AG04449 (cell line): ENCODE measurements at regions of chr15 and their contacts with region 1.

Region 1: DNA sequence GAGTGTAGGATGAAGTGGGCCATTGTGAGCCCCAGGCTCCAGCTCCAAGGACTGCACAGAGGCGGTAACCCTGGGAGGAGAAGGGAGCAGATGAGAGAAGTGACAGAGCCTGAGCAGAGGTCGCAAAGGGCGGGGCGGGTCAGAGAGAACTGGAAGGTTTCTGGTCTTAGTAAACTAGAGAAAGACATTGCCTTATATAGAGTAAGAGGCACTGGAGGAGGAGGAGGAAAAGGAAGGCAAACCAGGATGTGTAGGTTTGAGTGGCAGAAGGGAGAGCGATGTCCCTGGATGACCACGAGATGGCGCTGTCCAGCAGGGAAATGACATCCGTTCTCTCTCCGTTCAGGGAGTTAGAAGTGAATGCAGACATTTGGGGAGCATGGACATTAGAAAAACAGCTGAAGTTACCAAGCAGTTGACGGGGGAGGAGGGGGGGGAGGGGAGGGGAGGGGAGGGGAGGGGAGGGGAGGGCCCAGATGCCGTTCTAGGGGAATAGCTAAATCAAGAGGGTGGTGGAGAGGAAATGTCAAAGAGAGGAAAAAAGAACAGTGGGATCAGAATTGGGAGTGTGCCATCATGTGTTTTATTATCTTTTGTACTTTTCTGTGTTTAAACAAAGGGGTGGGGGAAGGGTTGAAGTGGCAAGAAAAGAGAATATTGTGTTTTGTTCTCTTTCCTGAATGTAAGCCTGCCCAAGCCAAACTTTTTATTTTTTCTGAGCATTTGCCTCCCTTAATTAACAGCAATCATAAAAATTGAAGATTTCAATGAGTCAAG is 48.8 kb downstream of the STARD5 start:
- DNase-seq: no peak
- H3K4me3 ChIP-seq: no peak overlapping the region
- CTCF ChIP-seq: peak; percentile 93

Region 2: DNA sequence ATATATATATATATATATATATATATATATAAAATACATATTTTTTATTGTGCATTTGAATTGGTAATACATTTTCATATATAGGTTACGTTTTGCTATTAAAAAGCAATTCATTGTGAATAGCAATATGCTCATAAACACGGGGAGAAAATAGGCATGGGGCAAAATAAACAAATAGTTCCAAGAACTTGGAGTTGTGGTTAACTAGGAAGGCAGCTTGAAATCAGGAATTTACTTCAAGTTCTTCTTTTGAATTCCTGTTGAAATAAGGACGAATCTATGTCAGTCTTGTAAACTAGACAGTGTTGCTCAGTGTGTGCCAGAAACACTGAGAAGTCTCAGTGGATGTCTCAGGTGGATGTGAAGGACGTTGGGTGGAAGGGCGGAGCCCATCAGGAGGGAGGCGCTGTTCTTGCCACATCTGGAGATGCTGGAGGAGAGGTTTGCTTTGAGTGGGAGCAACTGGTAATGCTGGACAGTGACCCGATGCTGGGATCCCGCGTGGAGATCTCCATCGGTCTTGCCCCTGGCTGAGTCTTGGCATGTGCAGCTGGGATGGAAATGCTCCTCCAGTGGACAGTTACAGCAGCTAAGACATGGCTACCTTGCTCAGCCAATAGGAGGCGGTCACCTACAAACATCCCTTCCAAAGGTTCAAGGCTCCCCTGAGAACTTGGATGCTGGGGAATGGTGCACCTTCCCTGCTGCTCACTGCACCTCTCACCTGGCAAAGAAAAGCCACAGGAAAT is 75.9 kb before region 1 on chr15:
- CTCF ChIA-PET with region 1: no interaction called
- POLR2A ChIA-PET with region 1: no interaction called
- DNase-seq: no peak
- H3K4me3 ChIP-seq: no peak overlapping the region
- CTCF ChIP-seq: no peak

Region 3: DNA sequence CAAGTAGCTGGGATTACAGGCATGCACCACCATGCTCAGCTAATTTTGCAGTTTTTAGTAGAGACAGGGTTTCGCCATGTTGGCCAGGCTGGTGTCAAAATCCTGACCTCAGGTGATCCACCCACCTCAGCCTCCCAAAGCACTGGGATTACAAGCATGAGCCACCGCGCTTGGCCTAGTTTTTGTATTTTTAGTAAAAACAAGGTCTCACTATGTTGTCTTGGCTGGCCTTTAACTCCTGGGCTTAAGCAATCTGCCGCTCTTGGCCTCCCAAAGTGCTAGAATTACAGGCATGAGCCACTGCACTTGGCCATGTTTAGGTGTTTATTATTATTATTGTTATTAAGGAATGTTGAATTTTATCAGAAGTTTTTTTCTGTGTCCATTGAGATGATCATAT is 63.7 kb before region 1 on chr15:
- CTCF ChIA-PET with region 1: no interaction called
- POLR2A ChIA-PET with region 1: no interaction called
- DNase-seq: no peak
- H3K4me3 ChIP-seq: no peak overlapping the region
- CTCF ChIP-seq: no peak

Region 4: GRCh38 chr15:81286621-81287121 is 11.6 kb after region 1 on chr15:
- CTCF ChIA-PET with region 1: interaction called, 34 read pairs
- POLR2A ChIA-PET with region 1: no interaction called
- DNase-seq: no peak
- H3K4me3 ChIP-seq: no peak overlapping the region
- CTCF ChIP-seq: no peak

Region 5: GRCh38 chr15:81323944-81324881 is 49.1 kb after region 1 on chr15 and contains the start of gene STARD5:
- CTCF ChIA-PET with region 1: interaction called, 26 read pairs
- POLR2A ChIA-PET with region 1: interaction called, 5 read pairs
- DNase-seq: peak; percentile 70
- H3K4me3 ChIP-seq: peak within 1 kb of the TSS; percentile 92
- CTCF ChIP-seq: no peak

Region 6: GRCh38 chr15:81336568-81336967 is 61.4 kb after region 1 on chr15:
- CTCF ChIA-PET with region 1: interaction called, 51 read pairs
- POLR2A ChIA-PET with region 1: no interaction called
- DNase-seq: no peak
- H3K4me3 ChIP-seq: no peak overlapping the region
- CTCF ChIP-seq: peak; percentile 37

Region 7: DNA sequence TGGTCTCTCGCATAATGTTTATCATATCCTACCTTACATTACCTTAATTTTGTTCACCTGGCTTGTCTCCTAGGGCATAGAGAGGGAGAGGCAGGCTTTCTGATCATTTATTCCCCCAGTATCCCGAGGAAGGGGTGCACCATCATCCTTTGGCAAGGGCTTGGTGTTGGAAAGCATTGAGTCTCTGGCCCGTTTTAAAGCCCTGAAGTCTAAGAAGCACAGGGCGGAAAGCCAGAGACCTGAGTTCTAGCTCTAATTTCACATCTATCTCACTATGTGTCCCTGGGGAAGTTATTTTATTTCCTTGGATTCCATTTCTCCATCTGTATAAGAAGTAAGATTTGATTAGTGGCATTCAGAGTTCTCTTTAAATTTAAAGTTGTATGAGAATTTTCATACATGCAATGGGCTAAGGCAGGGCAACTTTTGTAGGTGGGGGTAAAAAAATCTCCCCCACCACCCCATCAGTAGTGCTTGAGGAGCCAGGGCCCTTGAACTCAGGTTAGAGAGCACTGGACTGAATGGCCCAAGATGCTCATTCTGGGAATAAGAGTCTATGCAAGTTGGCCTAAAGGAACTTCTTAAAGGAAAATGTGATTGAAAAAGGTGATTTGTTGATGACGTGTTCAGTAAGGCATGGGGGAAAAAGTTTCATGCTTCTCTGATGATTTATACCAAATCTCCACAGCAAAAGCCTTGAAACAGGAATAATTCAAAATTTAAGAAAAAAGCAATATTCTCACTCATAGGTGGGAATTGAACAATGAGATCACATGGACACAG is 88.8 kb after region 1 on chr15:
- CTCF ChIA-PET with region 1: interaction called, 10 read pairs
- POLR2A ChIA-PET with region 1: no interaction called
- DNase-seq: no peak
- H3K4me3 ChIP-seq: no peak overlapping the region
- CTCF ChIP-seq: no peak

Region 8: GRCh38 chr15:81394603-81395002 is 119.5 kb after region 1 on chr15:
- CTCF ChIA-PET with region 1: interaction called, 517 read pairs
- POLR2A ChIA-PET with region 1: no interaction called
- DNase-seq: no peak
- H3K4me3 ChIP-seq: no peak overlapping the region
- CTCF ChIP-seq: no peak

Region 9: DNA sequence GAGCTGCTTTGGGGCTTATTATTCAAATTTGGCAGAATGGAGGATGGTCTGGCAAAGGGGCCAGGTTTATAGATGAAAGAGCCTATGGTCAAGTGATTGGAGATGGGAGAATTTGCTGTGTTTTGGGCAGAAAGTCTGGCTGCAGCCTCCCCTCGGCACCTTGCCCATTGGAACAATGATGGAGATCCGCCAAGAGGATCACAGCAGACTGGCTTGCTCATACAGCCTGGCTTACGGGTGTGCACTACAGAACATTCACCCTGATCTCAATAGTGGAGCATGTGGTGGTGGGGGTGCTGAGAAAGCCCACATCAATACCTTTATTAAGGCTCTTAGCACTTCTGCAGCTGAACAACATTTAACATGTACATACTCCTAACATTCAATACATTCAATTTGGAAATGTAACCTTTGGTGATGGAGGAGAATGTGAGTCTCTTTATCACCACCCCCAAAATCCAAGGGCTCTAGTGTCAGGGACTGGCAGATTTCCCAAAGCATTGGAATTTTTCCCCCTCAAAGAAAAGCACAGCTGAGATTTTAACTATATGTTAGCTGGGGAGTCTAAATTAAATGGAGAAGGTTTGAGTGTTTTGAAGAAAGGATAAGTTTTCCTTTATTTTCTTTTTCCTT is 217.3 kb after region 1 on chr15:
- CTCF ChIA-PET with region 1: no interaction called
- POLR2A ChIA-PET with region 1: no interaction called
- DNase-seq: no peak
- H3K4me3 ChIP-seq: no peak overlapping the region
- CTCF ChIP-seq: no peak

Region 10: DNA sequence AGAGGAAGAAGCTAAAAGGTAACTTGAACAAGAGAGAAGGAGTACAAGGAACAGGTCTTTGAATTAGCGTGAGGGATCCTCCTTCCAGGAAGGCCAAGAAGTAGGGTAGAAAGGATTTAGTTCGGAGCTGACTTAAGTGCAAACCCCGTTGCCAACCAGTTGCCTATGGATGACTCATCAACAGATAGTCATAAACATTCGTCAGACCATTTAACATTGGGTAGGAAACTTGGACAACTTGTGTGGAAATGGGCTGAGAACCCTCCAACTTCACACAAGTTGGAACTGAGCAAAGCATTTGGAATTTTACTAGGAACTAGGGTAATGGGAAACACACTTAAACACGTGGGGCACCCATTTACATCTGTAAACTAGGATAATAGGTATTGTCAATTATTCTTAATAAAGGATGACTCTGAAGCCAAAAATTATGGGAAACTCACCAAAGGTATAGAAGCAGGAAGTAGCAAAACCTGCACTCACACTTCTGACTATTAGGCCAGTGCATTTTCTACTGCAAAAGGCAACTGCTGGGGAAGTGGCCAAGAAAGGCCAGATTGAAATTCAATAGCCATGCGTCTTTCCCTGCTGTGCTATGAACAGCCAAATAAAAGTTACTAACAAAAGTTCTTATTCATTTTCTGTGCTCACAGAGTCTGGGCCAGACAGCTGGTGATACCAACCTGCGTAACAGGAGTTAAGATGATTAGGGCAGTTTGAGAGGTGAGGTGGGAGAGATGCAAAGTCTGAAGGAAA is 273.4 kb after region 1 on chr15:
- CTCF ChIA-PET with region 1: no interaction called
- POLR2A ChIA-PET with region 1: no interaction called
- DNase-seq: no peak
- H3K4me3 ChIP-seq: no peak overlapping the region
- CTCF ChIP-seq: no peak